CD14-positive monocyte (primary cell): ENCODE measurements at regions of chr19 and their contacts with region 1.

Region 1: DNA sequence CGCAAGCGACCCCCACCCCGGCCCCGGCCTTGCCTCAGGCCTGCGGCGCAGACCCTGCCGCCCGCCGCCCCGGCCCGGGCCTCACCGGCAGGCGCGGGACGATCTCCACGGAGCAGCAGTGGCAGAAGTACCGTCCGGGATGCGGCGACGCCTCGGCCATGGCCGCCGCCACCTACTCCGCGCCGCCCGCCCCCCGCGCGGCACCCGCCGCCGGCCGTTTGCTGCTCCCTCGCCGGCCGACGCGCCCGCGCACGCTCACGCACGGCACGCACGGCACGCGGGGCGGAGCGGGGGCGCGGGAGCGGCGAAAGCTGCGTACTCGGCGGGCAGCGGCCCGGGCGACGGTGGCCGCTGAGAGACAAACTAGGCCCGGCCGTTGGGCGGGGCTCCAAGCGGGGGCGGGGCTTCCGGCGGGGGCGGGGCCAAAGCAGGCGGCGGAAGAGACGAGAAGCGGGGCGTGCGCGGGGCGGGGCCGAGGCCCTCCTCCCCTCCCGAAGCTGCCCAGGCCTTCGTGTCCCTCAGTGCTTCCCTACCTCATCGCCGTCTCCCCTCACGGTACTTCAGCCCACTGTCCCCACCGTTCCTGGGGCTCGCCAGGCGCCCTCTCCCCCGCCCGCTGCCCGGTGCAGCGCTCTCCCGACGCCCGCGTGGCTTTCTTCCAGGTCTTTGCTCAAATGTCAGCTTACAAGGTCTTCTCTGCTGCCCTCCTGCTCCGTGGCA is at the start of gene RNF126:
- DNase-seq: peak; percentile 87 to 89 (median 89)
- H3K4me3 ChIP-seq: peak within 1 kb of the TSS; percentile 61 to 93 (median 88)
- H3K4me3 Mint-ChIP-seq: peak within 1 kb of the TSS; percentile 91 to 97
- H3K27ac ChIP-seq: peak within 1 kb of the TSS; percentile 75 to 88
- H3K27ac Mint-ChIP-seq: peak within 1 kb of the TSS; percentile 86 to 96 (median 93)
- H3K4me1 ChIP-seq: peaks cover 64 to 84% of the 10 kb centered on the region in 2 donors
- H3K4me1 Mint-ChIP-seq: peaks cover 60% of the 10 kb centered on the region
- H3K27me3 ChIP-seq: no peaks in the 10 kb centered on the region
- H3K27me3 Mint-ChIP-seq: peaks cover 0 to 1% (median 0%) of the 10 kb centered on the region in 3 donors
- CTCF ChIP-seq: no peak
- polyA plus RNA-seq, gene RNF126: 29.1 to 51.6 (median 31.6) TPM

Region 2: GRCh38 chr19:572140-572742 is 90.9 kb before region 1 on chr19 and contains the start of gene BSG:
- intact Hi-C with region 1: loop called in 1 of 2 experiments (anchors 5 kb)
- DNase-seq: peak; percentile 97 to 98 (median 98)
- H3K4me3 ChIP-seq: peak within 1 kb of the TSS; percentile 82 to 95 (median 90)
- H3K4me3 Mint-ChIP-seq: peak within 1 kb of the TSS; percentile 89 to 97
- H3K27ac ChIP-seq: peak within 1 kb of the TSS; percentile 75 to 84
- H3K27ac Mint-ChIP-seq: peak within 1 kb of the TSS; percentile 92 to 99 (median 98)
- H3K4me1 ChIP-seq: peaks cover 53 to 66% of the 10 kb centered on the region in 2 donors
- H3K4me1 Mint-ChIP-seq: peaks cover 62% of the 10 kb centered on the region
- H3K27me3 ChIP-seq: no peaks in the 10 kb centered on the region
- H3K27me3 Mint-ChIP-seq: peaks cover 0 to 2% (median 0%) of the 10 kb centered on the region in 3 donors
- CTCF ChIP-seq: no peak
- polyA plus RNA-seq, gene BSG: 190 to 431 (median 364) TPM

Region 3: GRCh38 chr19:633068-633785 is 29.9 kb before region 1 on chr19 and contains the start of gene POLRMT:
- intact Hi-C with region 1: loop called in 1 of 2 experiments (anchors 2 kb)
- DNase-seq: peak; percentile 98 to 99 (median 98)
- H3K4me3 ChIP-seq: peak within 1 kb of the TSS; percentile 72 to 99 (median 81)
- H3K4me3 Mint-ChIP-seq: peak within 1 kb of the TSS; percentile 94 to 98
- H3K27ac ChIP-seq: peak within 1 kb of the TSS in 1 of 2 donors; percentile 69
- H3K27ac Mint-ChIP-seq: peak within 1 kb of the TSS; percentile 75 to 90 (median 85)
- H3K4me1 ChIP-seq: peaks cover 18 to 26% of the 10 kb centered on the region in 2 donors
- H3K4me1 Mint-ChIP-seq: peaks cover 24% of the 10 kb centered on the region
- H3K27me3 ChIP-seq: peaks cover 0 to 2% of the 10 kb centered on the region in 2 donors
- H3K27me3 Mint-ChIP-seq: peaks cover 13 to 17% (median 14%) of the 10 kb centered on the region in 3 donors
- CTCF ChIP-seq: no peak
- polyA plus RNA-seq, gene POLRMT: 16.2 to 40.5 (median 17.6) TPM

Region 4: DNA sequence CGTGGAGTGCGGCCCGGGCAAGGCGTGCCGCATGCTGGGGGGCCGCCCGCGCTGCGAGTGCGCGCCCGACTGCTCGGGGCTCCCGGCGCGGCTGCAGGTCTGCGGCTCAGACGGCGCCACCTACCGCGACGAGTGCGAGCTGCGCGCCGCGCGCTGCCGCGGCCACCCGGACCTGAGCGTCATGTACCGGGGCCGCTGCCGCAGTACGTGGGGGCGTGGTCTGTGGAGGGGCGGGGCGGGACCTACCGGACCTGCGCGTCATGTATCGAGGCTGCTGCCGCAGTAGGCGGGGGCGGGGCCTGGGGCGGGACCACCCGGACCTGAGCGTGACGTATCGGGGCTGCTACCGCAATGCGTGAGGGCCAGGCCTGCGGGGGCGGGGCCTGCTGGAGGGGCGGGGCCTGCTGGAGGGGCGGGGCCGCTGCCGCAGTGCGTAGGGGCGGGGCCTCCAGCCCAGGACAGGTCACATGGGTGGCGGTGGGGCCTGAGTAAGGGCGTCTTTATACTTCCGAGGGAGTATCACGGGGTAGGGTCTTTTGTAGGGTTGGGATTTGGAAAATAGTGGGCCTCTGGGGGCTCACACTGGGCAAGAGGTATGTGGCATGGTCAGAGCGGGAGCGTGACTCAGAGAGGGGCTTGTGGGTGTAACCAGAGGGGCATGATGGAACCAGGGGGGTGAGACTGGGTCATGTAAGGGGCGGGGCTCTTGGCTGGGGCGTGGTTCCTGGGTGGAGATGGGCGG is 17.3 kb after region 1 on chr19:
- intact Hi-C with region 1: loop called (anchors 1 to 2 kb)
- DNase-seq: peak; percentile 97 to 99 (median 99)
- H3K4me3 ChIP-seq: peak overlapping the region; percentile 45 to 76 (median 53)
- H3K4me3 Mint-ChIP-seq: peak overlapping the region; percentile 90 to 97
- H3K27ac ChIP-seq: peak overlapping the region; percentile 91 to 96
- H3K27ac Mint-ChIP-seq: peak overlapping the region; percentile 98 to 100 (median 100)
- H3K4me1 ChIP-seq: peaks cover 39 to 48% of the 10 kb centered on the region in 2 donors
- H3K4me1 Mint-ChIP-seq: peaks cover 37% of the 10 kb centered on the region
- H3K27me3 ChIP-seq: peaks cover 0 to 20% of the 10 kb centered on the region in 2 donors
- H3K27me3 Mint-ChIP-seq: peaks cover 5 to 32% (median 22%) of the 10 kb centered on the region in 3 donors
- CTCF ChIP-seq: peak; percentile 44

Region 5: GRCh38 chr19:703651-704446 is 40.7 kb after region 1 on chr19:
- intact Hi-C with region 1: loop called (anchors 1 to 2 kb)
- DNase-seq: peak; percentile 90 to 94 (median 93)
- H3K4me3 ChIP-seq: peak overlapping the region; percentile 80 to 91 (median 86)
- H3K4me3 Mint-ChIP-seq: peak overlapping the region; percentile 94 to 98
- H3K27ac ChIP-seq: peak overlapping the region; percentile 58 to 66
- H3K27ac Mint-ChIP-seq: peak overlapping the region; percentile 92 to 98 (median 96)
- H3K4me1 ChIP-seq: peaks cover 53 to 60% of the 10 kb centered on the region in 2 donors
- H3K4me1 Mint-ChIP-seq: peaks cover 43% of the 10 kb centered on the region
- H3K27me3 ChIP-seq: peaks cover 0 to 9% of the 10 kb centered on the region in 2 donors
- H3K27me3 Mint-ChIP-seq: peaks cover 10 to 15% (median 15%) of the 10 kb centered on the region in 3 donors
- CTCF ChIP-seq: no peak

Region 6: GRCh38 chr19:732148-733069 is 69.3 kb after region 1 on chr19:
- intact Hi-C with region 1: loop called (anchors 1 to 2 kb)
- DNase-seq: no peak
- H3K4me3 ChIP-seq: no peak overlapping the region
- H3K4me3 Mint-ChIP-seq: no peak overlapping the region
- H3K27ac ChIP-seq: no peak overlapping the region
- H3K27ac Mint-ChIP-seq: peak overlapping the region in 1 of 7 donors; percentile 53
- H3K4me1 ChIP-seq: no peaks in the 10 kb centered on the region
- H3K4me1 Mint-ChIP-seq: peaks cover 6% of the 10 kb centered on the region
- H3K27me3 ChIP-seq: no peaks in the 10 kb centered on the region
- H3K27me3 Mint-ChIP-seq: peaks cover 1 to 12% (median 4%) of the 10 kb centered on the region in 3 donors
- CTCF ChIP-seq: no peak

Region 7: DNA sequence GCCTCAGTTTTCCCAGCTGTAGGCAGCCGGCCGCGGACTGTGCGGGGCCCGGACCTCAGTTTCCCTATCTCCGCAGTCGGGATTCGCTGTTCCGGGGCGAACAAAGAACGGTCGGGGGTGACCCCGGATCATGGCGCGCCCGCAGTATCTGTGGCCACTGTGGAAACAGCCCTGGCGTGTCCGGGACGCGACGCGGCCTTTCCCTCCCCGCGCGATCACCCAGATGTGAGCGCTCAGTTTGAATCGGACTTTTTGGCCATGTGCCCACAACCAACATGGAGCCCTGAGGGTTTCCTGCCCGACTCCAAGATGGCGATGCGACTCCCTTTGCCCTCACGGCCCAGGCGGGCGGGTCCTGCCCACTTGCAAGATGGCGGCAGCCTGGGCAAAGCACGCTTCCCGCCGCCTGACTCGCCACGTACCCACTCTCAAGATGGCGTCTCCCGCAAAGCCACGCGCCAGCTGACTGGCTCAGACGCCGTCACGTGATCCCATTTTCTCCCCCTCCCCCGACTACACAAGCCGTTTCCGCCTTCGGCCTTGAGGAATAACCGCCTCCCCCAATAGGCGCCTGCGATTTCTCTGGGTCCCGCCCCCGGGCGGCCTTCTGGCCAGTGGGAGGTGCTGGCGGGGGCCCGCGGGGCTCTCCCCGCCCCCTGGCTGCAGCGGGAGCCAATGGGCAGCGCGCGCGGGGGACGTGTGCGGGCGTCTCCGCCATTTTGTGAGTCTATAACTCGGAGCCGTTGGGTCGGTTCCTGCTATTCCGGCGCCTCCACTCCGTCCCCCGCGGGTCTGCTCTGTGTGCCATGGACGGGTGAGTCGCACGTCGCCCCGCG is 133.8 kb after region 1 on chr19 and contains the start of gene PTBP1:
- intact Hi-C with region 1: loop called in 1 of 2 experiments (anchors 5 kb)
- DNase-seq: peak; percentile 100
- H3K4me3 ChIP-seq: peak within 1 kb of the TSS; percentile 88 to 97 (median 91)
- H3K4me3 Mint-ChIP-seq: peak within 1 kb of the TSS; percentile 85 to 93
- H3K27ac ChIP-seq: peak within 1 kb of the TSS; percentile 66 to 73
- H3K27ac Mint-ChIP-seq: peak within 1 kb of the TSS; percentile 77 to 91 (median 85)
- H3K4me1 ChIP-seq: peaks cover 40 to 47% of the 10 kb centered on the region in 2 donors
- H3K4me1 Mint-ChIP-seq: peaks cover 28% of the 10 kb centered on the region
- H3K27me3 ChIP-seq: no peaks in the 10 kb centered on the region
- H3K27me3 Mint-ChIP-seq: peaks cover 0 to 1% (median 0%) of the 10 kb centered on the region in 3 donors
- CTCF ChIP-seq: no peak
- polyA plus RNA-seq, gene PTBP1: 62.4 to 117 (median 81.6) TPM